Stomach (tissue), 19 donors: ENCODE measurements at regions of chr3 and their contacts with region 1.

Region 1: DNA sequence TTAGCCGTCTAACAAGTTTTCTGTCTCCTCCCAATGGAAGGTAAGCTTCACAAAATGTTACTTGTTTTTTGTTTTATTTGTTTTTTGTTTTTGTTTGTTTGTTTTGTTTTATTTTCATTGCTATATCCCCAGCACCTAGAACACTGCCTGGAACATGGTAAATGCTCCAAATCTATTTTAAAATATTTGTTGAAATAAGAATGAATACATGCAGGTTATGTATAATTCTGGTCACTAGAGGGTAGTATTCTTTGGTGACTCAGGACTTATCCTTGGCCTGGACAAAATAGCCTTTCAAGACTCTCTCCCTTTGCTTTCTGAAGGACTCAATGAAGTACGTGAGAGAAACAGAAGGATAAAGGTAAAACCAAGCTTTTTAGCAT is 47.0 kb upstream of the PPP2R3A start:
- DNase-seq: peak in 1 of 2 donors; percentile 50
- H3K4me3 ChIP-seq: no peak overlapping the region
- H3K27ac ChIP-seq: no peak overlapping the region
- H3K4me1 ChIP-seq: no peaks in the 10 kb centered on the region
- H3K27me3 ChIP-seq: no peaks in the 10 kb centered on the region
- CTCF ChIP-seq: peak in 4 of 7 experiments; percentile 16 to 64 (median 22)
- EP300 ChIP-seq: no peak
- POLR2A ChIP-seq: no peak

Region 2: DNA sequence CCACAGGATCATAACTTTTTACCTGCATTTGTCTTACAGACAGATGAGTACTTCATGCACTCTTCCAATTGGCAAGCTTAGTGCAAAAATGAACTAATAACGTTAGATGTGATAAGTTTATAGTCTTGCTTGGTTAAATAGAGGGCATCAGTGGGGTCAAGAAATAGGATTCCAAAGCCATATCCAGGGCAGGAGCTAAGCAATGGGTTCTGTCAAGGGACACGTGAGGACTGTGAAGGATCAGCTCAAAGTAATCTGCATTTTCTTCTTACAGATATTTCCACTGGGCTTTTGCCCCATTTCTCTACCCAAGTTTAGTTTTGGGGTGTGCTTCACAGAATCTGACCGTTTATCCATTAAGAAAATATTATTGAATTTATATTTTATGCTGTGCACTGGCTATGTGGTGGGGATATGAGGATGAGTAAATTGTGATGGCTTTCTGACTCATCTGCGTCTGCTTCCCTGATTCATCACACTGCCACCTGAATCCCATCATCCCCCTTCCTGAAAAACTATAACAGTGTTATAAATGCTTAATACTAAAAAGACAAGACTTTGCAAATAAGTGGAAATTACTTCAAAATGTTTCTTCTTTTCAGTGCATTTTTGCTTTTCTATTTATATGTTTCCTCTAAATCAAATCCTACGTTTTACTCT is 64.5 kb after region 1 on chr3:
- intact Hi-C with region 1: no loop called
- DNase-seq: no peak
- H3K4me3 ChIP-seq: no peak overlapping the region
- H3K27ac ChIP-seq: no peak overlapping the region
- H3K4me1 ChIP-seq: peaks cover 0 to 48% (median 8%) of the 10 kb centered on the region in 4 donors
- H3K27me3 ChIP-seq: no peaks in the 10 kb centered on the region
- CTCF ChIP-seq: no peak
- EP300 ChIP-seq: no peak
- POLR2A ChIP-seq: no peak

Region 3: GRCh38 chr3:136036306-136036705 is 117.7 kb after region 1 on chr3:
- intact Hi-C with region 1: loop called (anchors 5 kb)
- DNase-seq: no peak
- H3K4me3 ChIP-seq: no peak overlapping the region
- H3K27ac ChIP-seq: no peak overlapping the region
- H3K4me1 ChIP-seq: peaks cover 0 to 15% (median 2%) of the 10 kb centered on the region in 4 donors
- H3K27me3 ChIP-seq: no peaks in the 10 kb centered on the region
- CTCF ChIP-seq: no peak
- EP300 ChIP-seq: no peak
- POLR2A ChIP-seq: no peak

Region 4: GRCh38 chr3:136120373-136121348 is 202.1 kb after region 1 on chr3:
- intact Hi-C with region 1: no loop called
- DNase-seq: no peak
- H3K4me3 ChIP-seq: no peak overlapping the region
- H3K27ac ChIP-seq: no peak overlapping the region
- H3K4me1 ChIP-seq: no peaks in the 10 kb centered on the region
- H3K27me3 ChIP-seq: no peaks in the 10 kb centered on the region
- CTCF ChIP-seq: no peak
- EP300 ChIP-seq: no peak
- POLR2A ChIP-seq: no peak